Dendritic cell treated with granulocyte-macrophage colony-stimulating factor and Interleukin-4, amounts not matched to agents 40 ng/mL and 50 ng/mL, for 4 days (primary cell): ENCODE measurements at regions of chr19 and their contacts with region 1.

Region 1: GRCh38 chr19:35931161-35931873 is 4.9 kb upstream of the LRFN3 start:
- H3K4me3 Mint-ChIP-seq: peak overlapping the region; percentile 60
- H3K27ac Mint-ChIP-seq: peak overlapping the region; percentile 83
- H3K4me1 Mint-ChIP-seq: peaks cover 47% of the 10 kb centered on the region
- H3K27me3 Mint-ChIP-seq: peaks cover 24% of the 10 kb centered on the region

Region 2: DNA sequence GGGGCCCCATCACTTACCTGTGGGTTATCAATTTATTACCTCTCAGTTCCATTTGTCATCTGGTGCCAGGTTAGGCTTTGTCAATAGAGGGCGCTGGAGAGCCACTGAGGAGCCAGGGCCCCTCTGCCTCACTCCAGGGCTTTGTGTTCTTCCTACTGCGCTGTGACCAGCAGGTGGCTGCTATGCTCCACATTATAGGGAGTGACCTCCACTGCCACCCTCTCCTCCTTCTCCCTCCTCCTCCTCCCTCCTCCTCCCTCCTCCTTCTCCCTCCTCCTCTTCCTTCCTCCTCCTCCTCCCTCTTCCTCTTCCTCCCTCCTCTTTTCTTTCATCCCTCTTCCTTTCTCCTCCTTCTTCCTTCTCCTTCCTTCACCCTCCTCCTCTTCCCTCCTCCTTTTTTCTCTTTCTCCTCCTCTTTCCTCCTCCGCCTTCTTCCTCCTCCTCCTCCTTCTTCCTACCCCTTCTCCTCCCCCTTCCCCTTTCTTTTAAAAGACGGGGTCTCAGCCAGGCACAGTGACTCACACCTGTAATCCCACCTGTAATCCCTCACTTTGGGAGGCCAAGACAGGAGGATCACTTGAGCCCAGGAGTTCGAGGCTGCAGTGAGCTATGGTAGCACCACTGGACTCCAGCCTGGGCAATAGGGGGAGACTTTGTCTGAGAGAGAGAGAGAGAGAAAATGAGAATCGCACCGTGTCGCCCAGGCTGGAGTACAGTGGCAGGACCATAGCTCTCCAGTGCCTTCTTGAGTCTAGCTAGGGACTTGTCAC is 237.3 kb before region 1 on chr19:
- intact Hi-C with region 1: loop called (anchors 5 kb)
- H3K4me3 Mint-ChIP-seq: no peak overlapping the region
- H3K27ac Mint-ChIP-seq: no peak overlapping the region
- H3K4me1 Mint-ChIP-seq: peaks cover 4% of the 10 kb centered on the region
- H3K27me3 Mint-ChIP-seq: peaks cover 4% of the 10 kb centered on the region

Region 3: GRCh38 chr19:35748106-35749020 is 183.0 kb before region 1 on chr19 and contains the start of gene LIN37:
- intact Hi-C with region 1: loop called (anchors 1 kb)
- H3K4me3 Mint-ChIP-seq: peak within 1 kb of the TSS; percentile 92
- H3K27ac Mint-ChIP-seq: peak within 1 kb of the TSS; percentile 86
- H3K4me1 Mint-ChIP-seq: peaks cover 64% of the 10 kb centered on the region
- H3K27me3 Mint-ChIP-seq: no peaks in the 10 kb centered on the region

Region 4: GRCh38 chr19:35879770-35880317 is 51.5 kb before region 1 on chr19:
- intact Hi-C with region 1: loop called (anchors 1 kb)
- H3K4me3 Mint-ChIP-seq: peak overlapping the region; percentile 22
- H3K27ac Mint-ChIP-seq: peak overlapping the region; percentile 21
- H3K4me1 Mint-ChIP-seq: peaks cover 11% of the 10 kb centered on the region
- H3K27me3 Mint-ChIP-seq: peaks cover 35% of the 10 kb centered on the region

Region 5: GRCh38 chr19:35899547-35900214 is 31.6 kb before region 1 on chr19:
- intact Hi-C with region 1: loop called (anchors 1 kb)
- H3K4me3 Mint-ChIP-seq: peak overlapping the region; percentile 98
- H3K27ac Mint-ChIP-seq: peak overlapping the region; percentile 96
- H3K4me1 Mint-ChIP-seq: peaks cover 67% of the 10 kb centered on the region
- H3K27me3 Mint-ChIP-seq: no peaks in the 10 kb centered on the region

Region 6: DNA sequence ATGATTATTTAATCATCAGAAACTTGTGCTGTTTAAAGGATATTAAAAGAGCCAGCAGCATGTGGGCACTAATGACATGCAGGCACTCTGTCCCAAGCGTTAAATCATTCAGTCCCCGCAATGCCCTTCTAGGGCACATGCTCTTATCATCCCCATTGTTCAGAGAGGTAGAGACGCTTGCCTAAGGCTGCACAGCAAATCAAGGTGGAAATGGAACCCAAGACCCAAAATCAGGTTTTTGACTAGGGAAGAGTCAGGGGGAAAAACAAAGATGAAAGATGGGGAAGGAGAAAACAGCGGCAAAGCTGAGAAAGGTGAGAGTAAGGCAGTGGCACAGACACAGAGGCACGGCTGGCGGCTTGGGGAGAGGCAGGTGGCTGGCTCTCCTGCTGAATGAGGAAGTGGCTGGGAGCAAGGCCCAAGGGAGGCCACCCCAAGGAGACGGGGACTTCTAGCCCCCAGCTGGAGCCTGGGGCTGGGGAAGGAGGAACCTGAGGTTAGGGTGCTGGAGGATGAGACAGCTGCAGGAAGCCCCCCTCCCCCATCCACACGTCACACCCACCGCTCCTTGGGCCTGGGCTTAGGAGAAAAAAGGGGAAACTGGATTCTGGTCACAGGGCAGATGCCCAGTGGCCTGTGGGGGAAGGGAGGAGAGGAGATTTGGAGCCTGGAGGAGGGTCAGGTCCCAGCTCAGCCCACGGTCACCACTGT is 22.2 kb before region 1 on chr19:
- intact Hi-C with region 1: loop called (anchors 2 kb)
- H3K4me3 Mint-ChIP-seq: peak overlapping the region; percentile 98
- H3K27ac Mint-ChIP-seq: peak overlapping the region; percentile 96
- H3K4me1 Mint-ChIP-seq: peaks cover 73% of the 10 kb centered on the region
- H3K27me3 Mint-ChIP-seq: no peaks in the 10 kb centered on the region

Region 7: GRCh38 chr19:35995048-35995993 is 64.0 kb after region 1 on chr19 and contains the start of gene SDHAF1:
- intact Hi-C with region 1: no loop called
- H3K4me3 Mint-ChIP-seq: peak within 1 kb of the TSS; percentile 84
- H3K27ac Mint-ChIP-seq: peak within 1 kb of the TSS; percentile 86
- H3K4me1 Mint-ChIP-seq: peaks cover 52% of the 10 kb centered on the region
- H3K27me3 Mint-ChIP-seq: no peaks in the 10 kb centered on the region